ENCODE measurements at regions of chr21 and their contacts with region 1.

Region 1: DNA sequence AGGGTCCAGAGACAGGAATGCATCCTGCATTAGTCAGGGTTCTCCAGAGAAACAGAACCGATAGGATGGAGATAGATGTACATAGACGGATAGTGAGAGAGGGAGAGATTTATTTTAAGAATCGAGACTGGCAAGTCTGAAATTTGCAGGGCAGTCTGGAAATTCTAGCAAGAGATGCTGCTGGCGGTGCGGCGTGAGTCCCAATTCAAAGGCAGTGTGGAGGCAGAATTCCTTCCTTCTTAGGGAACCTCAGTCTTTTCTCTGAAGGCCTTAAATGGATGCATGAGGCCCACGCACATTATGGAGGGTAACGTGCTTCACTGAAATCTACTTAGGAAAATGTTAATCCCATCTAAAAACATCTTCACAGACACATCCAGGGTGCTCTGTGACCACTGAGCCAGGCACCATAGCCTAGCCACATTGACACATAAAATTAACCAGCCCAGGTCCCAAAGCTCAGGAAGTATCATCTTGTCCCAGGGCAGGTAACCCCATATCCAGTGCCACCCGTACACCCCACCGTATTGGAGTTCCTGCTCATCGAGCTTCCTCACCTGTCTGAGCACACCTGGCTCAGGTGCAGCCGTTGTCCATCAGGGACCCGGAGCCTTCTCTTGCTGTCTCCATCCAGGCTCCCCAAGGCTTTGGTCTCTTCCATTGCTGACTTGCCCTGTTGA is 9.7 kb upstream of the PKNOX1 start:
- DNase-seq: no peak
- H3K4me3 ChIP-seq: no peak overlapping the region
- H3K27ac ChIP-seq: no peak overlapping the region
- H3K4me1 ChIP-seq: no peaks in the 10 kb centered on the region
- H3K27me3 ChIP-seq: no peaks in the 10 kb centered on the region
- CTCF ChIP-seq: no peak

Region 2: GRCh38 chr21:42905195-42905594 is 59.5 kb before region 1 on chr21:
- CTCF ChIA-PET with region 1: no interaction called
- dilution Hi-C with region 1: no loop called
- in situ Hi-C with region 1: loop called in 1 of 2 experiments (anchors 10 kb)
- intact Hi-C with region 1: no loop called
- DNase-seq: no peak
- H3K4me3 ChIP-seq: no peak overlapping the region
- H3K27ac ChIP-seq: no peak overlapping the region
- H3K4me1 ChIP-seq: no peaks in the 10 kb centered on the region
- H3K27me3 ChIP-seq: no peaks in the 10 kb centered on the region
- CTCF ChIP-seq: no peak

Region 3: DNA sequence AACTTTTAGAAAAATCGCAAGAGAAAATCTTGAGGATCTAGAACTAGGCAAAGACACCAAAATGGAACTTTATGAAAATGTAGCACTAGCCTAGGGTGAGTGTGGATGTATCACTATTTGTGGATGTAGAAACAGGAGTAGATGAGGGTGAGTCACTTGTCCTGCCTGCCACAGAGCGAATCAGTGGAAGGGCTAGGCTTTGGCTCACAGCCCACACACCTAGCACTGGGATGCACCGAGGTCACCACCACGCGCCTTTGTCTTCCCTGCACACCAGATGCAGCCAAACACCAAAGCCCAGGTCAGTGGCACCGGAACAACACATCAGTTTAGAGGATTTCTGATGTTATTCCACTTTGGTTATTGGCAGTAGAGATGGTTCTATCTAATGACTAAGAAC is 47.9 kb after region 1 on chr21:
- CTCF ChIA-PET with region 1: no interaction called
- dilution Hi-C with region 1: loop called (anchors 5 kb)
- in situ Hi-C with region 1: no loop called
- intact Hi-C with region 1: no loop called
- DNase-seq: peak; percentile 71
- H3K4me3 ChIP-seq: no peak overlapping the region
- H3K27ac ChIP-seq: no peak overlapping the region
- H3K4me1 ChIP-seq: no peaks in the 10 kb centered on the region
- H3K27me3 ChIP-seq: no peaks in the 10 kb centered on the region
- CTCF ChIP-seq: no peak

Measured in mammary epithelial cell (primary cell).